Head of caudate nucleus (tissue), 42 donors: ENCODE measurements at regions of chr1 and their contacts with region 1.

Region 1: GRCh38 chr1:51878616-51879336 is at the start of gene NRDC:
- DNase-seq: peak; percentile 97 to 100 (median 99)

Region 2: GRCh38 chr1:51235673-51236530 is 642.9 kb before region 1 on chr1 and contains the start of gene RNF11:
- intact Hi-C with region 1: loop called (anchors 10 kb)
- DNase-seq: peak; percentile 86 to 98 (median 95)